GM12878 (cell line): ENCODE measurements at regions of chr15 and their contacts with region 1.

Region 1: DNA sequence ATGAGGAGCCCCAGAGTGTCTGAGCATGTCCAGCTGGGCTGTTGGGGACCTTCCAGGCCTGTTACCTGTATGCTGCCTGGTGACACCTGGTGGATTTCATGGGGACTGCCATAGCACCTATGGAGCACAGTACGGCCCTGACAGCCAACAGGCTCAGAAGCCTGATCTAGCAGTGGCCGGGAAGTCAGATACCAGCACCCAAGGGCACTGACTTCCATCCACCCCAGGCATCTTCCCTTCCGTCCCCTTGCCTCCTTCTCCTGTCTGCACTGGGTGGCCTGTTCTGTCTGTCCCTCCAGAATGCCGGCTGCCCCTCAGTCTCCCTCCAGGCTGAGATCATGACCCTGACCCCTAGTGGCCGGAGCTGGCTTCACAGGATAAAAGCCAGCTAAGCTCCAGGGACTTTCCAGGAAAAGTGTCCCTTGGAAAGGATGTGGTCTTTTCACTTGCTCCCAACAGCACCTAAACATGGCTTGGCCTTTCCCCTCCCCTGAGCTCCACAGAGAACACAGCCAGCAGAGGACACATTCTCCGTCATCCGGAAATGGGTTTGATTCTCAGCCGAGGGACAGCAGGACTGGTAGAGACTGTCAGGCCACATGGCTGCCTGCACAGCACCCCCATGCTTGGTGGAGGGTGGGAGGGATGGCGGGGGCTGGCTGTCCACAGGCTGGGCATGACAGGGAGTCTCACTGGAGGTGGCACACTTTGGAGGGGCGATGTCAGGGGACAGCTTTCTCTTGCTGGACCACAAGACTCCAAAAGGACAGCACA is 9.5 kb downstream of the RPS17 start:
- DNase-seq: peak; percentile 55
- ATAC-seq: peak; percentile 82
- H3K4me3 ChIP-seq: peak overlapping the region; percentile 5; the same call in 1 of the 2 replicates
- H3K27ac ChIP-seq: peak overlapping the region; percentile 47
- H3K4me1 ChIP-seq: peaks cover 8% of the 10 kb centered on the region
- H3K27me3 ChIP-seq: no peaks in the 10 kb centered on the region
- CTCF ChIP-seq: peak; percentile 62 to 84 (median 80)
- EP300 ChIP-seq: 0 out of 4 replicates have a peak, but pooled peaks of 1 of the 2 experiments have one; percentile 12
- POLR2A ChIP-seq: no peak
- RAD21 ChIP-seq: peak; percentile 28; the same call in 1 of the 2 replicates

Region 2: GRCh38 chr15:82571722-82572222 is 41.0 kb after region 1 on chr15:
- CTCF ChIA-PET with region 1: no interaction called
- POLR2A ChIA-PET with region 1: no interaction called
- RAD21 ChIA-PET with region 1: no interaction called
- SMC1A ChIA-PET with region 1: no interaction called
- in situ Hi-C with region 1: no loop called
- intact Hi-C with region 1: no loop called
- DNase-seq: no peak
- ATAC-seq: no peak
- H3K4me3 ChIP-seq: no peak overlapping the region
- H3K27ac ChIP-seq: no peak overlapping the region
- H3K4me1 ChIP-seq: no peaks in the 10 kb centered on the region
- H3K27me3 ChIP-seq: peaks cover 5 to 12% of the 10 kb centered on the region in 2 experiments; a peak in 3 of 4 replicates
- CTCF ChIP-seq: no peak
- EP300 ChIP-seq: no peak
- POLR2A ChIP-seq: no peak
- RAD21 ChIP-seq: no peak

Region 3: GRCh38 chr15:82855286-82856100 is 324.7 kb after region 1 on chr15:
- CTCF ChIA-PET with region 1: no interaction called
- POLR2A ChIA-PET with region 1: no interaction called
- RAD21 ChIA-PET with region 1: no interaction called
- SMC1A ChIA-PET with region 1: no interaction called
- in situ Hi-C with region 1: no loop called
- intact Hi-C with region 1: no loop called
- DNase-seq: no peak
- ATAC-seq: no peak
- H3K4me3 ChIP-seq: no peak overlapping the region
- H3K27ac ChIP-seq: no peak overlapping the region
- H3K4me1 ChIP-seq: no peaks in the 10 kb centered on the region
- H3K27me3 ChIP-seq: no peaks in the 10 kb centered on the region
- CTCF ChIP-seq: no peak
- EP300 ChIP-seq: no peak
- POLR2A ChIP-seq: no peak
- RAD21 ChIP-seq: no peak

Region 4: GRCh38 chr15:83207622-83208411 is 677.0 kb after region 1 on chr15 and contains the start of gene HDGFL3:
- CTCF ChIA-PET with region 1: no interaction called
- POLR2A ChIA-PET with region 1: no interaction called
- RAD21 ChIA-PET with region 1: no interaction called
- SMC1A ChIA-PET with region 1: no interaction called
- in situ Hi-C with region 1: no loop called
- intact Hi-C with region 1: loop called (anchors 10 kb)
- DNase-seq: no peak
- ATAC-seq: peak; percentile 64
- H3K4me3 ChIP-seq: peak within 1 kb of the TSS; percentile 94
- H3K27ac ChIP-seq: peak within 1 kb of the TSS; percentile 80
- H3K4me1 ChIP-seq: peaks cover 6% of the 10 kb centered on the region; the same call in 1 of the 2 replicates
- H3K27me3 ChIP-seq: no peaks in the 10 kb centered on the region
- CTCF ChIP-seq: peak; percentile 44 to 49 (median 46); a peak in 5 of 6 replicates
- EP300 ChIP-seq: no peak
- POLR2A ChIP-seq: peak; percentile 79
- RAD21 ChIP-seq: peak; percentile 53
- polyA plus RNA-seq, gene HDGFL3: 5.6 to 6.6 TPM